ENCODE measurements at regions of chr5 and their contacts with region 1.

Region 1: DNA sequence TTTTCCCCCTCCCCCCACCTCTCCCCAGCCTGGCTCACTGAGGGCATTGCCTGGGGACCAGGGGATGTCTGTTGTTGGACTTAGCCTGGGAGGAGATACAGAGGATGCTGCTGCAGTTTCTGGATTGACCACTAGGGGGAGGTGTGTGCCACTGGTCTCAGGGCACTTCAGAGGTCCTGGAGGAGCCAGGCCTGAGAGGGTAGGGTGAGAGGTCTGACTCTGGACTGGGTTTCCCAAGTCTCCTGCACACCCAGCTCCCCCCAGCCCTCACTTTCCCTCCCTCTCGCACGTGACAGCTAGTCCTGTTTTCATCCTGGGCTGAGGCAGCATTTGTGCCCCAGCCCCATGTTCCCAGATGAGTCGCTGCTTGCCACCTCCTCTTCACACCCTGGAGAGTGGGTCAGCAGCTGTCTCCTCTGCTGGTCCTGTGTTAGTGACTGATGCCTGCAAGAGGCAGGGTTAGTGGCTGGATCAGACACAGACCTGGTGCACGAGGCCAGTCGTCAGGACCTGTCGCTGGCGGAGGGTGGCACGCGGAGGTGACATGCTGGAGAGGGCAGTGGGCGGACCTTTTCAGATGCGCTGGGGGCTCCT is 4.4 kb downstream of the IL3 start:
- DNase-seq: peak; percentile 61 to 76
- H3K4me3 ChIP-seq: no peak overlapping the region
- H3K27ac ChIP-seq: no peak overlapping the region
- H3K4me1 ChIP-seq: no peaks in the 10 kb centered on the region
- H3K27me3 ChIP-seq: no peaks in the 10 kb centered on the region
- CTCF ChIP-seq: peak; percentile 95

Region 2: GRCh38 chr5:131423056-131423455 is 641.8 kb before region 1 on chr5:
- CTCF ChIA-PET with region 1: no interaction called
- POLR2A ChIA-PET with region 1: no interaction called
- intact Hi-C with region 1: loop called (anchors 1 kb)
- DNase-seq: no peak
- H3K4me3 ChIP-seq: no peak overlapping the region
- H3K27ac ChIP-seq: no peak overlapping the region
- H3K4me1 ChIP-seq: no peaks in the 10 kb centered on the region
- H3K27me3 ChIP-seq: no peaks in the 10 kb centered on the region
- CTCF ChIP-seq: peak; percentile 57; the same call in 1 of the 2 replicates

Region 3: DNA sequence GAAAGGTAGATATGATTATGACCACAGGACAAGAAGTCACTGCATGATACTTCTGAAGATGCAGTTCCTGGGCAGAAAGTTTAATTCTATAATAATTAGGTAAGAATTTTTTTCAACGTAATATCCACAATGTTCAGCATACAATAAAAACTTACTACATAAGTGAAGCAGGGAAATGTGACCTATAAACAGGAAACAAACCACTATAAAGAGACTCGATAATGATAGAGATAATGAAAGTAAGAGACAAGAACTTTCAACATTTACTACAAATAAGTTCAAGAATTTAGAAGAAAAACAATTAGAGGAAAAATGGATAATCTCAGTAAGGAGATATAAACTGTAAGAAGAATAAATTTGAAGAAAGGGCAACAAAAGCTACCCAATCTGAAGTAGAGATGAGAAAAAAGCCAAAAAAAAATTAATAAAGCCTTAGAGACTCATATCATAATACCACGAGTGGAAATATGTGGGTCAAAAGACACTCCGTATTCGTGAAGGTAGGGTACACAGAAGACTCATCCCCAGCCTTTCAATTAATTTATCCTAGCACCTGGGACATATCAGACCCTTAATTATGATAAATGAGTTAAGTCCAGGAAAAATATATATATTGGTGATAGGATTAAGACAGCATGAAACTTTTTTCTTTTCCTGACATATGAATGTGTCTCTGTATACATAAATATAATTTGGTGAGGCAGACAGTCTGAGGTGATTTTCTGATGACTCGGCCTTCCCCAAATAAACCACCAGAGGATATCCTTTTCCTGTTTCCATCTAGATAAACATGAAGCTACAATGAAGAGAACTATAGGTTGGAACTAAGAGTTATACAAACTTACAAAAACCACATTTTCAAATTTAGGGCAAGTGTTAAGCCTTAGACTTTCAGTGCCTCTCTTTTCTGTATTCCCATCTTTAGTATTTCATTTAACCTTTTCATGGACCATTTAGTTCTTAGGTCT is 550.2 kb before region 1 on chr5:
- CTCF ChIA-PET with region 1: no interaction called
- POLR2A ChIA-PET with region 1: no interaction called
- intact Hi-C with region 1: no loop called
- DNase-seq: no peak
- H3K4me3 ChIP-seq: no peak overlapping the region
- H3K27ac ChIP-seq: no peak overlapping the region
- H3K4me1 ChIP-seq: no peaks in the 10 kb centered on the region
- H3K27me3 ChIP-seq: no peaks in the 10 kb centered on the region
- CTCF ChIP-seq: no peak

Region 4: GRCh38 chr5:131810510-131811249 is 254.2 kb before region 1 on chr5:
- CTCF ChIA-PET with region 1: no interaction called
- POLR2A ChIA-PET with region 1: no interaction called
- intact Hi-C with region 1: loop called (anchors 1 kb)
- DNase-seq: no peak
- H3K4me3 ChIP-seq: no peak overlapping the region
- H3K27ac ChIP-seq: no peak overlapping the region
- H3K4me1 ChIP-seq: peaks cover 8% of the 10 kb centered on the region; the same call in 1 of the 2 replicates
- H3K27me3 ChIP-seq: no peaks in the 10 kb centered on the region
- CTCF ChIP-seq: peak; percentile 39

Region 5: GRCh38 chr5:132134384-132134783 is 69.5 kb after region 1 on chr5:
- CTCF ChIA-PET with region 1: no interaction called
- POLR2A ChIA-PET with region 1: no interaction called
- intact Hi-C with region 1: loop called (anchors 1 kb)
- DNase-seq: peak in 1 of 2 experiments; percentile 41
- H3K4me3 ChIP-seq: no peak overlapping the region
- H3K27ac ChIP-seq: no peak overlapping the region
- H3K4me1 ChIP-seq: no peaks in the 10 kb centered on the region
- H3K27me3 ChIP-seq: no peaks in the 10 kb centered on the region
- CTCF ChIP-seq: peak; percentile 58

Region 6: GRCh38 chr5:132293066-132293991 is 228.5 kb after region 1 on chr5:
- CTCF ChIA-PET with region 1: no interaction called
- POLR2A ChIA-PET with region 1: no interaction called
- intact Hi-C with region 1: loop called (anchors 10 kb)
- DNase-seq: peak; percentile 60 to 78
- H3K4me3 ChIP-seq: peak overlapping the region; percentile 63
- H3K27ac ChIP-seq: peak overlapping the region; percentile 79
- H3K4me1 ChIP-seq: peaks cover 28% of the 10 kb centered on the region
- H3K27me3 ChIP-seq: no peaks in the 10 kb centered on the region
- CTCF ChIP-seq: no peak; the same call in 1 of the 2 replicates

Region 7: GRCh38 chr5:132526290-132526973 is 461.6 kb after region 1 on chr5:
- CTCF ChIA-PET with region 1: no interaction called
- POLR2A ChIA-PET with region 1: no interaction called
- intact Hi-C with region 1: loop called (anchors 10 kb)
- DNase-seq: peak; percentile 52 to 63
- H3K4me3 ChIP-seq: no peak overlapping the region
- H3K27ac ChIP-seq: no peak overlapping the region
- H3K4me1 ChIP-seq: no peaks in the 10 kb centered on the region
- H3K27me3 ChIP-seq: no peaks in the 10 kb centered on the region
- CTCF ChIP-seq: peak; percentile 97

Region 8: GRCh38 chr5:132820162-132820754 is 755.4 kb after region 1 on chr5:
- CTCF ChIA-PET with region 1: no interaction called
- POLR2A ChIA-PET with region 1: no interaction called
- intact Hi-C with region 1: loop called (anchors 1 kb)
- DNase-seq: peak; percentile 72 to 81
- H3K4me3 ChIP-seq: no peak overlapping the region
- H3K27ac ChIP-seq: no peak overlapping the region
- H3K4me1 ChIP-seq: peaks cover 14% of the 10 kb centered on the region
- H3K27me3 ChIP-seq: no peaks in the 10 kb centered on the region
- CTCF ChIP-seq: peak; percentile 96